H1 (cell line): ENCODE measurements at regions of chr4 and their contacts with region 1.

Region 1: GRCh38 chr4:16205298-16206164 is 20.7 kb downstream of the TAPT1 start:
- DNase-seq: no peak
- H3K4me3 ChIP-seq: no peak overlapping the region
- H3K27ac ChIP-seq: no peak overlapping the region
- H3K4me1 ChIP-seq: peaks cover 0 to 9% (median 4%) of the 10 kb centered on the region in 4 experiments; a peak in 5 of 7 replicates
- H3K27me3 ChIP-seq: no peaks in the 10 kb centered on the region
- CTCF ChIP-seq: peak in 2 of 3 experiments; percentile 50 to 78; a peak in 3 of 4 replicates
- EP300 ChIP-seq: no peak
- POLR2A ChIP-seq: no peak
- RAD21 ChIP-seq: peak; percentile 49 to 60

Region 2: GRCh38 chr4:16026160-16026761 is 179.3 kb before region 1 on chr4:
- CTCF ChIA-PET with region 1: interaction called, 22 read pairs
- POLR2A ChIA-PET with region 1: no interaction called
- DNase-seq: no peak
- H3K4me3 ChIP-seq: no peak overlapping the region
- H3K27ac ChIP-seq: no peak overlapping the region
- H3K4me1 ChIP-seq: peaks cover 0 to 5% (median 3%) of the 10 kb centered on the region in 4 experiments; a peak in 4 of 7 replicates
- H3K27me3 ChIP-seq: no peaks in the 10 kb centered on the region
- CTCF ChIP-seq: peak in 2 of 3 experiments; percentile 70 to 71; a peak in 3 of 4 replicates
- EP300 ChIP-seq: no peak
- POLR2A ChIP-seq: no peak
- RAD21 ChIP-seq: peak; percentile 88 to 90

Region 3: GRCh38 chr4:16104520-16104919 is 101.0 kb before region 1 on chr4:
- CTCF ChIA-PET with region 1: no interaction called
- POLR2A ChIA-PET with region 1: no interaction called
- DNase-seq: no peak
- H3K4me3 ChIP-seq: no peak overlapping the region
- H3K27ac ChIP-seq: no peak overlapping the region
- H3K4me1 ChIP-seq: no peaks in the 10 kb centered on the region
- H3K27me3 ChIP-seq: no peaks in the 10 kb centered on the region
- CTCF ChIP-seq: no peak
- EP300 ChIP-seq: no peak
- POLR2A ChIP-seq: no peak
- RAD21 ChIP-seq: no peak

Region 4: GRCh38 chr4:16125571-16126445 is 79.7 kb before region 1 on chr4:
- CTCF ChIA-PET with region 1: interaction called, 12 read pairs
- POLR2A ChIA-PET with region 1: no interaction called
- DNase-seq: no peak
- H3K4me3 ChIP-seq: no peak overlapping the region
- H3K27ac ChIP-seq: no peak overlapping the region
- H3K4me1 ChIP-seq: peaks cover 0 to 2% (median 0%) of the 10 kb centered on the region in 4 experiments; a peak in 2 of 7 replicates
- H3K27me3 ChIP-seq: no peaks in the 10 kb centered on the region
- CTCF ChIP-seq: no peak
- EP300 ChIP-seq: no peak
- POLR2A ChIP-seq: no peak
- RAD21 ChIP-seq: peak; percentile 20 to 37; a peak in 3 of 4 replicates

Region 5: GRCh38 chr4:16225863-16226815 is 20.6 kb after region 1 on chr4 and contains the start of gene TAPT1:
- CTCF ChIA-PET with region 1: interaction called, 13 read pairs
- POLR2A ChIA-PET with region 1: interaction called, 3 read pairs
- DNase-seq: peak in 1 of 2 experiments; percentile 83
- H3K4me3 ChIP-seq: peak within 1 kb of the TSS; percentile 72 to 77 (median 74)
- H3K27ac ChIP-seq: peak within 1 kb of the TSS; percentile 78; the same call in 1 of the 2 replicates
- H3K4me1 ChIP-seq: peaks cover 2 to 9% (median 4%) of the 10 kb centered on the region in 4 experiments; a peak in 4 of 7 replicates
- H3K27me3 ChIP-seq: no peaks in the 10 kb centered on the region
- CTCF ChIP-seq: no peak
- EP300 ChIP-seq: no peak
- POLR2A ChIP-seq: peak; percentile 50 to 64; a peak in 2 of 3 replicates
- RAD21 ChIP-seq: no peak
- total RNA-seq, gene TAPT1: 13.0 and 15.3 TPM in 2 replicates

Region 6: GRCh38 chr4:16264798-16265197 is 59.3 kb after region 1 on chr4:
- CTCF ChIA-PET with region 1: interaction called, 14 read pairs
- POLR2A ChIA-PET with region 1: no interaction called
- DNase-seq: no peak
- H3K4me3 ChIP-seq: no peak overlapping the region
- H3K27ac ChIP-seq: no peak overlapping the region
- H3K4me1 ChIP-seq: no peaks in the 10 kb centered on the region
- H3K27me3 ChIP-seq: peaks cover 0 to 1% (median 0%) of the 10 kb centered on the region in 4 experiments; a peak in 1 of 7 replicates
- CTCF ChIP-seq: peak in 2 of 3 experiments; percentile 25 to 41; a peak in 2 of 4 replicates
- EP300 ChIP-seq: no peak
- POLR2A ChIP-seq: no peak
- RAD21 ChIP-seq: peak; percentile 65 to 69